Caco-2 (cell line): ENCODE measurements at regions of chr4 and their contacts with region 1.

Region 1: DNA sequence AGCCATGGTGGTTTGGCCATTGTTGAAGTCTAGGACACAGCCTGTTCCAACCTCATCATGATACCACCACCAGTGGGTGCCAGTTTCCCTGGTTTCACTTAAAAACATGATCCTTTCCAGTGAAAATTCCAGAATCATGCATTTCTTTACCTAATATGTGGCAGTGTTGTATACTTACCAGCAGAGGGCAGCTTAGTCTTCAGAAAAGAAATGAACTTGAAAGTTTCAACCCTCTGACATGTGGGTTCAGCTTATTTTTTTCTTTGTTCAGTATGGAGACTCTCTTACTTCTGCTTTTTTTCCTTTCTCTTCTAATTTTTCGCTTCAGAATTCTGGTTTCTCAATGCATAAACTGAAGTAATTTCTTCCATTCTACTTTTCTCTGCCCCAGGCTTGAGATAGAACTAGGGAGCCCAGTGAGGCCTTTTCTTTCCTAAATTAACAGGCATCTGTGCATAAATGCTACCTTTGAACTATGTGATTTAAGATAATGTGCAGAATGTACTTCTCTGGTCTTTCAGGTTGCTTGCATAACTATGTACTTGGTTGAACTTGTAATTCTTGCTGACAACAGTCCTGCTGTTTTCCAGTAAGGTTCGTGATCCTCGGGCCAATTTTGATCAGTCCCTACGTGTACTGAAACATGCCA is 10.7 kb downstream of the LIAS start:
- DNase-seq: peak; percentile 76
- H3K4me3 ChIP-seq: no peak overlapping the region
- H3K4me3 Mint-ChIP-seq: no peak overlapping the region
- H3K27ac Mint-ChIP-seq: peak overlapping the region; percentile 54
- H3K4me1 ChIP-seq: peaks cover 6% of the 10 kb centered on the region
- H3K4me1 Mint-ChIP-seq: no peaks in the 10 kb centered on the region
- H3K27me3 ChIP-seq: no peaks in the 10 kb centered on the region
- H3K27me3 Mint-ChIP-seq: no peaks in the 10 kb centered on the region
- CTCF ChIP-seq: peak; percentile 84 to 86

Region 2: DNA sequence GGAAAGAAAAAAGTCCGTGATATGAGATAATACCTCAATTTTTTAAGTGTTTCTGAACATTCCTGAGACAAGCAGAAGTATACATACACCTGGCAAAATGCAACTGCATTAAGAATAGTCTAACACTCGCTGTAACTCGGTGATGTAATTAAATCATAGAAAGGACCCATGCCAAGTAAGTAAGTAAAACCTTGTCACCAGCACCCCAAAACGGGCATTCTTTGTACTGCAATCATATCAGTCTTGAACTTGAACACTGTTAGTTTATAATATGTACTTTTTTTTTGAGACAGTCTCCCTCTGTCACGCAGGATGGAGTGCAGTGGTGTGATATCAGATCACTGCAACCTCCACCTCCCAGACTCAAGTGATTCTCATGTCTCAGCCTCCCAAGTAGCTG is 121.7 kb after region 1 on chr4:
- CTCF ChIA-PET with region 1: no interaction called
- POLR2A ChIA-PET with region 1: no interaction called
- intact Hi-C with region 1: loop called (anchors 1 kb)
- DNase-seq: no peak
- H3K4me3 ChIP-seq: no peak overlapping the region
- H3K4me3 Mint-ChIP-seq: no peak overlapping the region
- H3K27ac Mint-ChIP-seq: no peak overlapping the region
- H3K4me1 ChIP-seq: no peaks in the 10 kb centered on the region
- H3K4me1 Mint-ChIP-seq: no peaks in the 10 kb centered on the region
- H3K27me3 ChIP-seq: no peaks in the 10 kb centered on the region
- H3K27me3 Mint-ChIP-seq: no peaks in the 10 kb centered on the region
- CTCF ChIP-seq: no peak

Region 3: DNA sequence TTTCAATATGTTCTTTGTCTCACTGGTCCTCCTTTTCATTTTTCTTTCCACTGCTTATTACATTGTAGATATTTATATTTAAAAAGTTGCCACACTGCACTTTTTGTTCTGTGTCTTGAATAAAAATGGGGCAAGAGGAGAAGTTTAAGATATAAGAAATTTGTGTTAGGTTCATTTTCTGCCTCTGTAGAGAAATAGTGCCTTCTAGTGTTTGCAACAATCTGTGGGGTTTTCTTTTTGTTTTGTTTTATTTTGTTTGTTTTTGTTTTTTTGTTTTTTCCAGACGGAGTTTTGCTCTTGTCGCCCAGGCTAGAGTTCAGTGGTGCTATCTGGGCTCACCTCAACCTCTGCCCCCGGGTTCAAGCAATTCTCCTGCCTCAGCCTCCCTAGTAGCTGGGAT is 189.2 kb after region 1 on chr4:
- CTCF ChIA-PET with region 1: no interaction called
- POLR2A ChIA-PET with region 1: no interaction called
- intact Hi-C with region 1: loop called (anchors 2 kb)
- DNase-seq: no peak
- H3K4me3 ChIP-seq: no peak overlapping the region
- H3K4me3 Mint-ChIP-seq: no peak overlapping the region
- H3K27ac Mint-ChIP-seq: no peak overlapping the region
- H3K4me1 ChIP-seq: peaks cover 3% of the 10 kb centered on the region
- H3K4me1 Mint-ChIP-seq: no peaks in the 10 kb centered on the region
- H3K27me3 ChIP-seq: no peaks in the 10 kb centered on the region
- H3K27me3 Mint-ChIP-seq: no peaks in the 10 kb centered on the region
- CTCF ChIP-seq: no peak

Region 4: DNA sequence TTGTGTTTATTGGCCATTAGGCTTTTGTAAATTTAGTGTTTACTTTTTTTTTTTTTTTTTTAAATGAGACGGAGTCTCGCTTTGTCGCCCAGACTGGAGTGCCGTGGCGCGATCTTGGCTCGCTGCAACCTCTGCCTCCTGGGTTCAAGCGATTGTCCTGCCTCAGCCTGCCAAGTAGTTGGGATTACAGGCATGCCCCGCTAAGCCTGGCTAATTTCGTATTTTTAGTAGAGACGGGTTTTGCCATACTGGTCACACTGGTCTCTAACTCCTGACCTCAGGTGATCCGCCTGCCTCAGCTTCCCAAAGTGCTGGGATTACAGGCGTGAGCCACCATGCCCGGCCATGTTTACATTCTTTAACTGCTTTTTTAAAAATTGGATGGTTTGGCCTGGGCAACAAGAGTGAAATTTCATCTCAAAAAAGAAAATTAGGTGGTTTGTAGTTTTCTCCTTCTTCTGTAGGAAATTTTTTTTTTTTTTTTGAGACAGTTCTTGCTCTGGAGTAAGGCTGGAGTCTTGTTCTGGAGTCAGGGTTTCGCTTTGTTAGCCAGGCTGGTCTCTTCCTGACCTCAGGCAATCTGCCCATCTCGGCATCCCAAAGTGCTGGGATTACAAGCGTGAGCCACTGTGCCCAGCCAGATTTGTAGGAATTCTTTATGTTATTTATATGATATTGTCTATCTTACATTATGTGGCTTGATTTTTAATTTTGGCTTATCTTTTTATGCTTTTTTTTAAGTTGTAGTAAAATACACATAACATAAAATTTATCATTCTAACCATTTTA is 243.5 kb after region 1 on chr4:
- CTCF ChIA-PET with region 1: no interaction called
- POLR2A ChIA-PET with region 1: interaction called, 25 read pairs
- intact Hi-C with region 1: no loop called
- DNase-seq: no peak
- H3K4me3 ChIP-seq: no peak overlapping the region
- H3K4me3 Mint-ChIP-seq: no peak overlapping the region
- H3K27ac Mint-ChIP-seq: no peak overlapping the region
- H3K4me1 ChIP-seq: 0 out of 2 replicates have a peak, but pooled peaks cover 3% of the 10 kb centered on the region
- H3K4me1 Mint-ChIP-seq: peaks cover 6% of the 10 kb centered on the region
- H3K27me3 ChIP-seq: no peaks in the 10 kb centered on the region
- H3K27me3 Mint-ChIP-seq: no peaks in the 10 kb centered on the region
- CTCF ChIP-seq: no peak

Region 5: DNA sequence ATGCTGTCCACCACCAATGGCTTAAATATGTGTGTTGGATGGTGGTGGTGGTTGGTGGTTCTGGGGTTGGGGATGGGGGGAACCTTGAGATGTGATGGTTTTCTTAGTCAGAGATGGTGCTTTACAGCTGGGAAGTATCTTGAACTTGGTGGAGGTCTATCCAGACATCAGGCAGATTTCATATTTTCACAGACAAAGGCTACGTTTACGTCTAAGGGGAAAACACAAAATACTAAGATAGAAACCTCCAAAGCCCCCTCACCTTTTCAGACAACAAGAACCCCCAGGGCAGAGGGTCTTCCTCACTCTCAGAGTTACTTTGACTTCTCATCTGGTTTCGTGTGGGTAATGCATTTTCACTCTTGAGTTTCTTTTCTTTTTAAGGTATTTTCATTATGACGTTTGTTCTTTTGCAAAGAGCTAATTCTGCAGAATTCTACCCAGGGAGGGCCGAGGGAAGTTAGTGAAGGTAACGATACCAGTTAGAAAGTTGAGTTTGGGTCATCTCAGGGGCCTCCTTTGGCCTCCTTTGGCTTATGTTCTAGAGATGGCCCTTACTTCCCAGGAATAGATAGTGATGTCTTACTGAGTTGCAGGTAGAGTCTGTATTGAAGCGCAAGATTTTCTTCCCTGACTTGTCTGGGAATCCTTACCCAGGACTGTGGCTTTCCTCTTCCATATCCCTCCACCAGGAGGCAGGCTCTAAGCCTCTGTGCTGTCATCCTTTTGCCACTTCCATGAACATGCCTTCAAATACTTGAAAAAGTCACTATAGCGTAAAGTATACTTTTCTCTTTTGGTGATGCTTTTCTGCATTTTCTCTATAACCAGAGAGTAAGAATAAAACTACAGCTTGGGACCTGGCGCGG is 759.2 kb after region 1 on chr4:
- CTCF ChIA-PET with region 1: no interaction called
- POLR2A ChIA-PET with region 1: no interaction called
- intact Hi-C with region 1: no loop called
- DNase-seq: peak in 1 of 2 experiments; percentile 15
- H3K4me3 ChIP-seq: no peak overlapping the region
- H3K4me3 Mint-ChIP-seq: no peak overlapping the region
- H3K27ac Mint-ChIP-seq: no peak overlapping the region
- H3K4me1 ChIP-seq: no peaks in the 10 kb centered on the region
- H3K4me1 Mint-ChIP-seq: no peaks in the 10 kb centered on the region
- H3K27me3 ChIP-seq: no peaks in the 10 kb centered on the region
- H3K27me3 Mint-ChIP-seq: no peaks in the 10 kb centered on the region
- CTCF ChIP-seq: peak in 1 of 2 experiments; percentile 33